ENCODE measurements at regions of chr5 and their contacts with region 1.

Region 1: GRCh38 chr5:124536333-124536732 is 210.1 kb downstream of the ZNF608 start:
- DNase-seq: peak; percentile 91
- H3K4me3 ChIP-seq: no peak overlapping the region
- H3K27ac ChIP-seq: peak overlapping the region; percentile 63
- H3K4me1 ChIP-seq: peaks cover 28% of the 10 kb centered on the region
- H3K27me3 ChIP-seq: no peaks in the 10 kb centered on the region
- CTCF ChIP-seq: no peak
- POLR2A ChIP-seq: no peak

Region 2: GRCh38 chr5:124438903-124439281 is 97.4 kb before region 1 on chr5:
- CTCF ChIA-PET with region 1: no interaction called
- POLR2A ChIA-PET with region 1: no interaction called
- dilution Hi-C with region 1: no loop called
- intact Hi-C with region 1: loop called (anchors 2 kb)
- DNase-seq: peak; percentile 80
- H3K4me3 ChIP-seq: peak overlapping the region in 1 of 3 experiments; percentile 2
- H3K27ac ChIP-seq: no peak overlapping the region
- H3K4me1 ChIP-seq: peaks cover 7% of the 10 kb centered on the region
- H3K27me3 ChIP-seq: no peaks in the 10 kb centered on the region
- CTCF ChIP-seq: no peak
- POLR2A ChIP-seq: no peak

Region 3: GRCh38 chr5:124456249-124456648 is 80.1 kb before region 1 on chr5:
- CTCF ChIA-PET with region 1: no interaction called
- POLR2A ChIA-PET with region 1: no interaction called
- dilution Hi-C with region 1: no loop called
- intact Hi-C with region 1: loop called (anchors 5 kb)
- DNase-seq: no peak
- H3K4me3 ChIP-seq: no peak overlapping the region
- H3K27ac ChIP-seq: no peak overlapping the region
- H3K4me1 ChIP-seq: no peaks in the 10 kb centered on the region
- H3K27me3 ChIP-seq: no peaks in the 10 kb centered on the region
- CTCF ChIP-seq: no peak
- POLR2A ChIP-seq: no peak

Region 4: DNA sequence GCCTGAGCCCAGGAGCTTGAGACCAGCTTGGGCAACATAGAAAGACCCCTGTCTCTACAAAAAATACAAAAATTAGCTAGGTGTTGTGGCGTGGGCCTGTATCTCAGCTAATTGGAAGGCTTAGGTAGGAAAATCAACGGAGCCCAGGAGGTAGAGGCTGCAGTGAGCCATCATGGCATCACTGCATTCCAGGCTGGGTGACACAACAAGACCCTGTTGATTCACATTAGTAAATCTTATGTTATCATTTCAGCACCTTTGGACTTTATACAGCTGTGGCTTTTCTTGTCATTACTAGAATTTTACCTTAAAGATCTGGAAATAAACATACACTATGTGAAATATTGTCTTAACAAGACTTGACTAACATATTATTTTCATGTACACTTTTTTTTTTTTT is 25.1 kb after region 1 on chr5:
- CTCF ChIA-PET with region 1: no interaction called
- POLR2A ChIA-PET with region 1: no interaction called
- dilution Hi-C with region 1: no loop called
- intact Hi-C with region 1: no loop called
- DNase-seq: no peak
- H3K4me3 ChIP-seq: no peak overlapping the region
- H3K27ac ChIP-seq: no peak overlapping the region
- H3K4me1 ChIP-seq: no peaks in the 10 kb centered on the region
- H3K27me3 ChIP-seq: no peaks in the 10 kb centered on the region
- CTCF ChIP-seq: no peak
- POLR2A ChIP-seq: no peak

Region 5: DNA sequence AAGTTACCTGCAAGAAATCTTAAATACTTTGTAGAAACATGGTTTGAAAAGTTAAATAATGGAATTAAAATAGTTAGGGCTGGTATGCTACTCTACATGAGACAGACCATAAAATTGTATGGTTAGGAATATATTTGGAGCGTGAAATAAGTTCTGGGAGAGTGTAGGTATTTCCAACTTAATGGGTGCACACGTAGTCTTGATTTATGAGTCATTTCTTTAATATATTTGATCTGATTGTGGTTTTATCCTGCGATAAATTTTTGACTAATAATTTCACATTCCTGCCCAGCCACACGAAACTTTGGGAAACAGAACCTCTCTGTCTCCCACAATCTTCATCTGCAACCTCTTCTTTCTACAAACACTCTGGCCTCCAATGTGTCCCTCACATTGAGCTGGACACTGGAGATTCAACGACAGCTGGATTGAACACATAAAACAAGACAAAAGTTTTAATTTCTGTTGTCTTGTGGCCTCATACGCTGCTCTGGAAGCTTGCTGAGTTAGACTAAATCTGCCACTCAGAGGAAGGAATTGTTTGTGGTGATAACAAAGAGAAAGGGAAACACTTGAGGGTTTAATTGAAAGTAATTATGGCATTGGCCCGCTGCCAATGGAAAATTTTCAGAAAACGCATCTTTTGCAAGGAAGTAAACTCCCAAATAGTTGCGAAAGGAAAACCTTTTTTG is 411.9 kb after region 1 on chr5:
- CTCF ChIA-PET with region 1: no interaction called
- POLR2A ChIA-PET with region 1: no interaction called
- dilution Hi-C with region 1: no loop called
- intact Hi-C with region 1: loop called (anchors 10 kb)
- DNase-seq: peak; percentile 90
- H3K4me3 ChIP-seq: no peak overlapping the region
- H3K27ac ChIP-seq: no peak overlapping the region
- H3K4me1 ChIP-seq: peaks cover 9% of the 10 kb centered on the region
- H3K27me3 ChIP-seq: no peaks in the 10 kb centered on the region
- CTCF ChIP-seq: no peak
- POLR2A ChIP-seq: no peak

Region 6: GRCh38 chr5:125550274-125550673 is 1013.9 kb after region 1 on chr5:
- CTCF ChIA-PET with region 1: no interaction called
- POLR2A ChIA-PET with region 1: no interaction called
- dilution Hi-C with region 1: no loop called
- intact Hi-C with region 1: loop called (anchors 5 kb)
- DNase-seq: peak; percentile 97
- H3K4me3 ChIP-seq: no peak overlapping the region
- H3K27ac ChIP-seq: peak overlapping the region; percentile 69
- H3K4me1 ChIP-seq: peaks cover 30% of the 10 kb centered on the region
- H3K27me3 ChIP-seq: no peaks in the 10 kb centered on the region
- CTCF ChIP-seq: no peak
- POLR2A ChIP-seq: peak; percentile 66

Measured in endothelial cell of umbilical vein (primary cell).